BJ (cell line): ENCODE measurements at regions of chrX and their contacts with region 1.

Region 1: DNA sequence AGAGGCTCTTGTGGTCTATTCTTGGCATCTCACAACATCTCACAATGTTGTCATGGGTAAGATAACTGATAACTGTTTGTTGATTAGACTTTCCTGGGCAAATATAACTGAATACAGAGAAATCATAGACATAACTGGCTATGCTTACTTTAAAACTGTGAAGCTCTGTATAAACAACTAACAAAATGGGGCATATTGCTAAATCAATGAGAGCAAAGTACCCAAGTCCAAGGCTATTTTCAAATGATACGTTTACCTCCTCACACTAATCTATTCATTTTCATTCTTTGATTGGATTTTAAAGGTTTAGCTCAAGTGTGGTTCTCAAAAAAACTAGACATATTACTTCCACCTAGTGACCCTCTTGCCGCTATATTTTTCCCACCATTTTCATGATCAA is 38.6 kb downstream of the AMELX start:
- DNase-seq: no peak
- H3K4me3 ChIP-seq: no peak overlapping the region
- H3K27me3 ChIP-seq: no peaks in the 10 kb centered on the region
- CTCF ChIP-seq: no peak

Region 2: GRCh38 chrX:10579112-10580011 is 752.4 kb before region 1 on chrX:
- CTCF ChIA-PET with region 1: no interaction called
- POLR2A ChIA-PET with region 1: no interaction called
- DNase-seq: no peak
- H3K4me3 ChIP-seq: no peak overlapping the region; the same call in 1 of the 2 replicates
- H3K27me3 ChIP-seq: no peaks in the 10 kb centered on the region
- CTCF ChIP-seq: no peak

Region 3: GRCh38 chrX:10932842-10933440 is 398.8 kb before region 1 on chrX:
- CTCF ChIA-PET with region 1: no interaction called
- POLR2A ChIA-PET with region 1: no interaction called
- DNase-seq: no peak
- H3K4me3 ChIP-seq: no peak overlapping the region
- H3K27me3 ChIP-seq: no peaks in the 10 kb centered on the region
- CTCF ChIP-seq: no peak

Region 4: DNA sequence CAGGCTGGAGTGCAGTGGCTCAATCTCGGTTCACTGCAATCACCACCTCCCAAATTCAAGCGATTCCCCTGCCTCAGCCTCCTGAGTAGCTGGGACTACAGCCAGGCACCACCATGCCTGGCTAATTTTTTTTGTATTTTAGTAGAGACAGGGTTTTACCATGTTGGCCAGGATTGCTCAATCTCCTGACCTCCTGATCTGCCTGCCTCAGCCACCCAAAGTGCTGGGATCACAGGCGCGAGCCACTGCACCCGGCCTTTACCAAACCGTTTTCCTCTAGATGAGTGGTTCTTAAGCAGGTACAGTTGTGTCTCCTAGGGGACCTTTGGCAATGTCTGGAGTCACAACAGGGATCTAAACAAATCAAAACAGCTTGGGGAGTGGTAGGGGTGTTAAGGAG is 27.0 kb before region 1 on chrX:
- CTCF ChIA-PET with region 1: no interaction called
- POLR2A ChIA-PET with region 1: interaction called, 12 read pairs
- DNase-seq: no peak
- H3K4me3 ChIP-seq: no peak overlapping the region
- H3K27me3 ChIP-seq: no peaks in the 10 kb centered on the region
- CTCF ChIP-seq: no peak